Gastrocnemius medialis (tissue), 4 donors: ENCODE measurements at regions of chr7 and their contacts with region 1.

Region 1: DNA sequence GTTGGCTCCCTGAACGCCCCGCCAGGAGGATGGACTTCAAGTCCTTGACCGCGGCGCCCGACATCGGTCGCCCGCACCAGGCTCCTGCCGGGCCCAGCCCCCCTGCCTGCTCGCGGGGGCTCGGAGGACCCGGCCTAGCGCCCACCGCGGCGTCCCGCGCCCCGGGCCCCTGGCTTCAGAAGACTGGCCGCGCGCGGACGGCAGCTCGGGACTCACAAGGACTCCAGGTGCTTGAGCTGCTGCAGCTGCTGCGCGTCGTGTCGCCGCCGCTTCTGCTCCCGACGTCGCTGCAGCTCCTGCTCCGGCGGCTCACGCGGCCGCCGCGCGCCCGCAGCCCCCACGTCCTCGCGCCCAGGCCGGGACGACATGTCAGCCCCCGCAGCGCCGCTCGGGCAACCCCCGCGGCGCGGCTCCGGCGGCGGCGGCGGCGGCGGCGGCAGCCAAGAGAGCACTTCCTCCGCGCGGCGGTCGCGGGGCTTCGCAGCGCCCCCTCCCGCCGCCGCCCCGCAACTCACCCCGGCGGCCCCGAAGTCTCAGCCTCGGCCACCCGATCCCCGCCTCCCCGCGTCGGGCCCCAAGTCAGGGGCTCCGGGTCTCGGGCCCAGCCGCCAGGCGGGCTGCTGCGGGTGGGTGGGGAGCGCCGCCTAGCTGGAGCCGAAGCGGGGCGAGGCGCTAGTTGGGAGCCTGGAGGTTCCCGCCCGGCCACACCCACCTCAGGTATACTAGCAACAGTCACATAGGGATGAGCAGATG is at the start of gene RP9:
- DNase-seq: peak; percentile 12 to 40
- ATAC-seq: peak; percentile 89 to 92
- H3K4me3 ChIP-seq: peak within 1 kb of the TSS; percentile 64 to 92 (median 80)
- H3K27ac ChIP-seq: peak within 1 kb of the TSS; percentile 64 to 86 (median 80)
- H3K4me1 ChIP-seq: peaks cover 25 to 31% of the 10 kb centered on the region in 2 donors
- H3K27me3 ChIP-seq: no peaks in the 10 kb centered on the region
- CTCF ChIP-seq: peak; percentile 45 to 78 (median 59)
- POLR2A ChIP-seq: peak; percentile 20 to 56
- total RNA-seq, gene RP9: 13.0 to 23.9 (median 20.1) TPM

Region 2: GRCh38 chr7:32761451-32762205 is 347.6 kb before region 1 on chr7:
- in situ Hi-C with region 1: no loop called
- intact Hi-C with region 1: loop called (anchors 10 kb)
- DNase-seq: no peak
- ATAC-seq: no peak
- H3K4me3 ChIP-seq: no peak overlapping the region
- H3K27ac ChIP-seq: no peak overlapping the region
- H3K4me1 ChIP-seq: no peaks in the 10 kb centered on the region
- H3K27me3 ChIP-seq: no peaks in the 10 kb centered on the region
- CTCF ChIP-seq: no peak
- POLR2A ChIP-seq: no peak

Region 3: GRCh38 chr7:32803406-32804141 is 305.6 kb before region 1 on chr7:
- in situ Hi-C with region 1: no loop called
- intact Hi-C with region 1: loop called (anchors 10 kb)
- DNase-seq: no peak
- ATAC-seq: no peak
- H3K4me3 ChIP-seq: no peak overlapping the region
- H3K27ac ChIP-seq: no peak overlapping the region
- H3K4me1 ChIP-seq: no peaks in the 10 kb centered on the region
- H3K27me3 ChIP-seq: no peaks in the 10 kb centered on the region
- CTCF ChIP-seq: no peak
- POLR2A ChIP-seq: no peak